ENCODE measurements at regions of chr20 and their contacts with region 1.

Region 1: GRCh38 chr20:35741892-35742740 is at the start of gene RBM39:
- DNase-seq: peak; percentile 100
- ATAC-seq: peak; percentile 83
- H3K4me3 ChIP-seq: peak within 1 kb of the TSS; percentile 95 to 99 (median 99)
- H3K4me3 Mint-ChIP-seq: peak within 1 kb of the TSS; percentile 95
- H3K27ac ChIP-seq: peak within 1 kb of the TSS; percentile 100
- H3K27ac Mint-ChIP-seq: peak within 1 kb of the TSS; percentile 100
- H3K4me1 ChIP-seq: peaks cover 38 to 42% of the 10 kb centered on the region in 2 donors
- H3K4me1 Mint-ChIP-seq: peaks cover 46% of the 10 kb centered on the region
- H3K27me3 ChIP-seq: no peaks in the 10 kb centered on the region
- H3K27me3 Mint-ChIP-seq: no peaks in the 10 kb centered on the region
- CTCF ChIP-seq: peak; percentile 57
- total RNA-seq, gene RBM39: 689 and 698 TPM in 2 replicates

Region 2: GRCh38 chr20:35454881-35455609 is 287.1 kb before region 1 on chr20 and contains the start of gene CEP250:
- CTCF ChIA-PET with region 1: no interaction called
- POLR2A ChIA-PET with region 1: interaction called, 19 read pairs
- intact Hi-C with region 1: loop called (anchors 2 kb)
- DNase-seq: peak; percentile 97
- ATAC-seq: peak; percentile 99
- H3K4me3 ChIP-seq: peak within 1 kb of the TSS; percentile 71 to 97 (median 94)
- H3K4me3 Mint-ChIP-seq: peak within 1 kb of the TSS; percentile 87
- H3K27ac ChIP-seq: peak within 1 kb of the TSS; percentile 82 to 97
- H3K27ac Mint-ChIP-seq: peak within 1 kb of the TSS; percentile 97
- H3K4me1 ChIP-seq: peaks cover 0 to 17% of the 10 kb centered on the region in 2 donors
- H3K4me1 Mint-ChIP-seq: peaks cover 16% of the 10 kb centered on the region
- H3K27me3 ChIP-seq: no peaks in the 10 kb centered on the region
- H3K27me3 Mint-ChIP-seq: no peaks in the 10 kb centered on the region
- CTCF ChIP-seq: no peak
- total RNA-seq, gene CEP250: 78.4 and 78.5 TPM in 2 replicates

Region 3: GRCh38 chr20:35541783-35542588 is 200.1 kb before region 1 on chr20 and contains the start of gene ERGIC3:
- CTCF ChIA-PET with region 1: no interaction called
- POLR2A ChIA-PET with region 1: interaction called, 4 read pairs
- intact Hi-C with region 1: loop called (anchors 2 kb)
- DNase-seq: peak; percentile 98
- ATAC-seq: peak; percentile 93
- H3K4me3 ChIP-seq: peak within 1 kb of the TSS; percentile 55 to 94 (median 87)
- H3K4me3 Mint-ChIP-seq: peak within 1 kb of the TSS; percentile 94
- H3K27ac ChIP-seq: peak within 1 kb of the TSS; percentile 63 to 82
- H3K27ac Mint-ChIP-seq: peak within 1 kb of the TSS; percentile 94
- H3K4me1 ChIP-seq: peaks cover 9 to 18% of the 10 kb centered on the region in 2 donors
- H3K4me1 Mint-ChIP-seq: peaks cover 26% of the 10 kb centered on the region
- H3K27me3 ChIP-seq: no peaks in the 10 kb centered on the region
- H3K27me3 Mint-ChIP-seq: no peaks in the 10 kb centered on the region
- CTCF ChIP-seq: no peak
- total RNA-seq, gene ERGIC3: 167 and 191 TPM in 2 replicates

Region 4: DNA sequence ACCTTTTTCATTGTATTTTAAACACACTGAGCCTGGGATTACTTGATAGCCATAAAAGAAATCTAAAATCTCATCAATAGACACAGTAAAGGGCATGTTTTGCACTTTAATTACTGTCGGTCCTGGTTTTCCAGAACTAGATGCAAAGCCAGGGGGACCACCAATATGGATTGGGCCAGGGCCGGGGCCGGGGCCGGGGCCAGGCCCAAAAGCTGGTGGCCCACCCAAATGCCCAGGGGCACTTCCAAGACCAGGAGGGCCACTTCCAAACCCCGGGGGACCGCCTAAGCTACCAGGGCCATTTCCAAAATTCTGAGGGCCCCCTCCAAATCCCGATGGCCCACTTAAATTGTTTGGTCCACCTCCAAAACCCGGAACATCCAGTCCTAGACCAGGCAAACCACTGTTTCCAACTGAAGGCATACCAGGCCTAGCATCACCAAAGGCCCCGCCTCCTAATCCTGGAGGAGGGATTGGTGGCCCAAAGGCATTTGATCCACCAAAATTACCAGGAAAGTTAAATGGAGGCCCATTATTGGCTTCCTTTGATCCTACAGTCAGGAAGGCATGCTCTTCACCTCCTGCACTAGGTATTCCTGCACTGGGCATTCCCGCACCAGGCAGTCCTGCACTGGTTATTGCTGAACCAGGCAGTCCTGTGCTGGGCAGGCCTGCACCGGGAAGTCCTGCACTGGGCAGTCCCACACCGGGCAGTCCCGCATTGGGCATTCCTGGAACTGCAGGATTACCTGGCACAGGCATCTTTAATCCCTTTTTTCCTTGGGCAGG is 89.3 kb before region 1 on chr20:
- CTCF ChIA-PET with region 1: no interaction called
- POLR2A ChIA-PET with region 1: no interaction called
- intact Hi-C with region 1: no loop called
- DNase-seq: no peak
- ATAC-seq: no peak
- H3K4me3 ChIP-seq: no peak overlapping the region
- H3K4me3 Mint-ChIP-seq: no peak overlapping the region
- H3K27ac ChIP-seq: no peak overlapping the region
- H3K27ac Mint-ChIP-seq: no peak overlapping the region
- H3K4me1 ChIP-seq: peaks cover 0 to 7% of the 10 kb centered on the region in 2 donors
- H3K4me1 Mint-ChIP-seq: peaks cover 32% of the 10 kb centered on the region
- H3K27me3 ChIP-seq: no peaks in the 10 kb centered on the region
- H3K27me3 Mint-ChIP-seq: no peaks in the 10 kb centered on the region
- CTCF ChIP-seq: no peak

Region 5: GRCh38 chr20:35664544-35665221 is 77.4 kb before region 1 on chr20 and contains the starts of genes CPNE1 and RBM12:
- CTCF ChIA-PET with region 1: interaction called, 3 read pairs
- POLR2A ChIA-PET with region 1: interaction called, 32 read pairs
- intact Hi-C with region 1: loop called (anchors 1 kb)
- DNase-seq: peak; percentile 96
- ATAC-seq: peak; percentile 77
- H3K4me3 ChIP-seq: peak within 1 kb of the TSS; percentile 76 to 98 (median 90)
- H3K4me3 Mint-ChIP-seq: peak within 1 kb of the TSS; percentile 92
- H3K27ac ChIP-seq: peak within 1 kb of the TSS; percentile 96 to 97
- H3K27ac Mint-ChIP-seq: peak within 1 kb of the TSS; percentile 100
- H3K4me1 ChIP-seq: peaks cover 39 to 42% of the 10 kb centered on the region in 2 donors
- H3K4me1 Mint-ChIP-seq: peaks cover 48% of the 10 kb centered on the region
- H3K27me3 ChIP-seq: no peaks in the 10 kb centered on the region
- H3K27me3 Mint-ChIP-seq: no peaks in the 10 kb centered on the region
- CTCF ChIP-seq: no peak
- total RNA-seq, gene CPNE1: 323 and 331 TPM in 2 replicates
- total RNA-seq, gene RBM12: 144 and 145 TPM in 2 replicates

Region 6: GRCh38 chr20:35757098-35757705 is 15.1 kb after region 1 on chr20:
- CTCF ChIA-PET with region 1: interaction called, 4 read pairs
- POLR2A ChIA-PET with region 1: interaction called, 10 read pairs
- intact Hi-C with region 1: no loop called
- DNase-seq: no peak
- ATAC-seq: no peak
- H3K4me3 ChIP-seq: no peak overlapping the region
- H3K4me3 Mint-ChIP-seq: no peak overlapping the region
- H3K27ac ChIP-seq: no peak overlapping the region
- H3K27ac Mint-ChIP-seq: no peak overlapping the region
- H3K4me1 ChIP-seq: no peaks in the 10 kb centered on the region
- H3K4me1 Mint-ChIP-seq: no peaks in the 10 kb centered on the region
- H3K27me3 ChIP-seq: no peaks in the 10 kb centered on the region
- H3K27me3 Mint-ChIP-seq: no peaks in the 10 kb centered on the region
- CTCF ChIP-seq: no peak

Region 7: GRCh38 chr20:35856866-35857265 is 114.8 kb after region 1 on chr20:
- CTCF ChIA-PET with region 1: no interaction called
- POLR2A ChIA-PET with region 1: no interaction called
- intact Hi-C with region 1: no loop called
- DNase-seq: no peak
- ATAC-seq: no peak
- H3K4me3 ChIP-seq: no peak overlapping the region
- H3K4me3 Mint-ChIP-seq: no peak overlapping the region
- H3K27ac ChIP-seq: no peak overlapping the region
- H3K27ac Mint-ChIP-seq: peak overlapping the region; percentile 15
- H3K4me1 ChIP-seq: no peaks in the 10 kb centered on the region
- H3K4me1 Mint-ChIP-seq: peaks cover under 1% of the 10 kb centered on the region
- H3K27me3 ChIP-seq: no peaks in the 10 kb centered on the region
- H3K27me3 Mint-ChIP-seq: no peaks in the 10 kb centered on the region
- CTCF ChIP-seq: no peak

Region 8: DNA sequence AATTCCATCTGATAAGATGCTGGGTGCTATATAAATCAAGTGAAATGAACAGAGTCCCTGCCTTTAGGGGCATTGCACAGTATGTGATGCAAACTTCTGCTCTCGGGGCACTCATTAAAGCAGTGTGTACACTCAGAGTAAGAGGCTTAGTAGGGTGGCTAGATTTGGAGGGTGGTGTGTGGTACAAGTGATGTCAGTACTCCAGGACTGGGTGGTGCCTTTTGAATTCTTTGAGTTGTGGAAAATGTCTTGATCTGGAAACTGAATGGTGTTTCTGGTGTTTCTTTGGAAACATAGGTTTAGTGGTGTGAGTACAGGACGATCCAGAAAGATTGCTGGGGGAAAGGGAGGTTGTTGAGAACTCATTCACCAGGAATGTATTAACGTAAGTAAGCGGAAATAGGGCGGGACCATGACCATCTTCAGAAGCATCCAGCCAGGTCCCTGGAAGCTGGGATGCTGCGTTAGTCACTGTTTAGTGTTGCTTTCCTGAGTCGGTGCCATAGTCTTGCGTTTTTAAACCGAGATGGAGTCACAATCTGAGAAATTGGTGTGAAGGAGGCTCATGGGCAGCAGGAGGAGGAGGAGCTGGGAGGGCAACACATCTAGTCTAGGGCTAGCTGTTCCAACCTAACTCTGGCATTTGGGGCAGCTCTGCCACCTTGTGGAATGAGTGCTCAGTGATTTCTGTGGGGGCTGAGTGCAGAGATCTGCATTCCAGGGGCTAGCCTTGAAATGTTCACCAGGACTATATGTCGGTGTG is 141.8 kb after region 1 on chr20:
- CTCF ChIA-PET with region 1: interaction called, 8 read pairs
- POLR2A ChIA-PET with region 1: no interaction called
- intact Hi-C with region 1: loop called (anchors 2 kb)
- DNase-seq: peak; percentile 68
- ATAC-seq: peak; percentile 84
- H3K4me3 ChIP-seq: no peak overlapping the region
- H3K4me3 Mint-ChIP-seq: no peak overlapping the region
- H3K27ac ChIP-seq: peak overlapping the region in 1 of 2 donors; percentile 16
- H3K27ac Mint-ChIP-seq: peak overlapping the region; percentile 22
- H3K4me1 ChIP-seq: no peaks in the 10 kb centered on the region
- H3K4me1 Mint-ChIP-seq: peaks cover 7% of the 10 kb centered on the region
- H3K27me3 ChIP-seq: no peaks in the 10 kb centered on the region
- H3K27me3 Mint-ChIP-seq: no peaks in the 10 kb centered on the region
- CTCF ChIP-seq: peak; percentile 72